ENCODE measurements at regions of chr22 and their contacts with region 1.

Region 1: DNA sequence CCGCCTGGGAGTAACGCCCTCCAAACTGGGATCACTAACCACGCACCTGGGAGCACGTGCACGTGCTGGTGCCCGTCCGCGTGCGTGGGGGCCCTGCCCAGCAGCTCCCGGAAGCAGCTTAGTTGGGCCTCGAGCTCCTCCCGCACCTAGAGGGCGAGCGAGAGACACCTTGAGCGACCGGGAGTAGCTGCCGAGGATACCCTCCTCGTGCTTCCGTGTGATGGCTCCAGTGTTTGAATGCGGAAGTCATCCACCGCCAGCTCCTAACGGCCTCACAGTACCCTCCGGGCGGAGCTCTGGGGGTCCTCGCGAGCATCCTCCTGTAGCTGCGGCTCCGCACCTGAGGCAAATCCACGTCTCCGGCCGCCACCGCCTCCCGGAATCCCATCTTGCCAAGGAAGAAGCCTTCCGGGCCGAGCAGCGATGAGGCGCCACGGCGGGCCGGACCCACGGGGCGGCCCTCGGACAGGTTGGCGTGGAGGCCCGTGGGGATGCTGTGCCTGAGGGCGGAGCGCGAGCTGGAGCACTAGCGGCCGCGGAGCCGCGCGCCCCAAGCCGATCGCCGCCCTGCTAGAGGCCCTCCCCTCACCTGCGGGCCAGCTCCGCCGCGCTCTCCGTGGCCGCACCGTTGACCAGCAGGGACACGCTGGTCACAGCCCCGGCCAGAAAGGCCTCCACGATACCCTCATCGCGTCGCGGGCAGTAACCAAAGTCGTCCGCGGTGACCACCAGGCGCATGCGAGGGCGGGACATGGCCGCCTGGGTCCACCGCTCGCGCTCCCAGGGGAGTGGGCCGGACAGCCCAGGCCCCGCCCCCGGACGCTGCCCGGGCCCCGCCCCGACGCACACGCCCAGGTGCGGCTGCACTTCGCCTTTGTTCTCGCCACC is at the start of gene YDJC:
- DNase-seq: peak; percentile 95
- ATAC-seq: peak; percentile 88
- H3K4me3 Mint-ChIP-seq: peak within 1 kb of the TSS; percentile 87
- H3K27ac Mint-ChIP-seq: peak within 1 kb of the TSS; percentile 95
- H3K4me1 Mint-ChIP-seq: peaks cover 46% of the 10 kb centered on the region
- H3K27me3 Mint-ChIP-seq: no peaks in the 10 kb centered on the region
- total RNA-seq, gene YDJC: 46.7 to 47.1 TPM

Region 2: DNA sequence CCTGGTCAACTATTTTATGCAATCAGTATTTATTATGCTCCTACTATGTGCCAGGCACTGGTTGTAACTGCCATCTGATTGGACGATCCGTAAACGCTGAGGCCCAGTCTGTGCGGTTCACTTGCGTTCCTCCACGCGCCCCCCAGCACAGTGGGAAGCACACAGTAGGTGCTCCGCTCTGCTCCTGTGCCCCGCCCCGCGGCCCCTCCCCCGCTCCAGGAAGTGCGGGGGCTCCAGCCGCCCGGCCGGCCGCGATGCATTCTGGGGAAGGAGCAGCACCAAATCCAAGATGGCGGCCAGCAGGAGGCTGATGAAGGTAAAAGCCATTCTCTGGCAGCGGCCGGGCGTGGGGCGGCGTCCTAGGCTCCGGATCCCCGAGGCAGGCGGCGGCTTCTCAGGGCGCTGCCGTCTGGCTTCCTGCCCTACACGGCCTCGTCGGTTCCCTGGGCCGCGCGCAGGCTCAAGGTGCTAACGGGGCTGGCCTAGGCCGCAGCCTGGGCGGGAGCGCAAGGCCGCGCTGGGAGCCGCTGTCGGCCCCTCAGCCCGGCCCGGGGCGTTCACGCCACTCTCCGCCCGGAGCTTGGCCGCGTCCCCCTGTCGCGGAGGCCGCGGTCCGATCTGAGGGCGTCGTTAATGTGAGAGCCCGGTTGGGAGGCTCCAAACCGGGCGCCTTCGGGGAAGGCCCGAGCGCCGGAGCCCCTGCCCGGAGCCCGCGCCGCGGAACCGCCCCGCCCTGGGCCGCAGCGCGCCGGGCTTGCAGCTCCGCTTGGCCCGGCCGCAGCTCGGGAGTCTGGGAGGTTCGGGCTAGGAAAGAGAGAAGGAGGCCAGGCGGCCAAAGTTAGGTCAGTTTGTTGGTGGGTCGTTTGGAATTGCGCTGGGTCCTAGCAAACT is 61.8 kb before region 1 on chr22 and contains the start of gene UBE2L3:
- CTCF ChIA-PET with region 1: interaction called, 13 read pairs
- POLR2A ChIA-PET with region 1: interaction called, 12 read pairs
- DNase-seq: peak; percentile 90
- ATAC-seq: peak; percentile 77
- H3K4me3 Mint-ChIP-seq: peak within 1 kb of the TSS; percentile 96
- H3K27ac Mint-ChIP-seq: peak within 1 kb of the TSS; percentile 94
- H3K4me1 Mint-ChIP-seq: peaks cover 44% of the 10 kb centered on the region
- H3K27me3 Mint-ChIP-seq: no peaks in the 10 kb centered on the region
- total RNA-seq, gene UBE2L3: 65.3 to 69.6 TPM

Region 3: DNA sequence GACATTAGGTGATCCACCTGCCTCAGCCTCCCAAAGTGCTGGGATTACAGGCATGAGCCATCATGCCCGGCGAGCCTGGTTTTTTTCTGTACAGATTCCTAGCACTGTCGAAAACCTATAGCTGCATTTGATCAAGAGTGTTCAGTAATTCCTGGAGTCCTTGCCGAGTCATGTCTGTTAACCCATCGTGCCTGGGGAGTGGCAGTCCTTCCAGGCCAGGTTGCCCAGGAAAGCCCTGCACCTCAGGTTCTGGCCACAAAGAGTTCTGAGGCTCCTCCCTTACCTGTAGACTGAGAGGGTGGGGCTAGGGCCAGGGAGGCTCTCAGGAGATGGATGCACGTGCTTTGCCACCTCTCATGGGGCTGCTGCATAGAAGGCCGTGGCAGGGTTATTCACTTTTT is 16.6 kb before region 1 on chr22:
- CTCF ChIA-PET with region 1: interaction called, 23 read pairs
- POLR2A ChIA-PET with region 1: interaction called, 10 read pairs
- DNase-seq: no peak
- ATAC-seq: no peak
- H3K4me3 Mint-ChIP-seq: no peak overlapping the region
- H3K27ac Mint-ChIP-seq: no peak overlapping the region
- H3K4me1 Mint-ChIP-seq: peaks cover 7% of the 10 kb centered on the region
- H3K27me3 Mint-ChIP-seq: no peaks in the 10 kb centered on the region

Region 4: GRCh38 chr22:21652010-21652546 is 22.6 kb after region 1 on chr22:
- CTCF ChIA-PET with region 1: interaction called, 304 read pairs
- POLR2A ChIA-PET with region 1: interaction called, 22 read pairs
- DNase-seq: peak; percentile 93
- ATAC-seq: peak; percentile 99
- H3K4me3 Mint-ChIP-seq: peak overlapping the region; percentile 94
- H3K27ac Mint-ChIP-seq: peak overlapping the region; percentile 87
- H3K4me1 Mint-ChIP-seq: peaks cover 38% of the 10 kb centered on the region
- H3K27me3 Mint-ChIP-seq: no peaks in the 10 kb centered on the region

Region 5: DNA sequence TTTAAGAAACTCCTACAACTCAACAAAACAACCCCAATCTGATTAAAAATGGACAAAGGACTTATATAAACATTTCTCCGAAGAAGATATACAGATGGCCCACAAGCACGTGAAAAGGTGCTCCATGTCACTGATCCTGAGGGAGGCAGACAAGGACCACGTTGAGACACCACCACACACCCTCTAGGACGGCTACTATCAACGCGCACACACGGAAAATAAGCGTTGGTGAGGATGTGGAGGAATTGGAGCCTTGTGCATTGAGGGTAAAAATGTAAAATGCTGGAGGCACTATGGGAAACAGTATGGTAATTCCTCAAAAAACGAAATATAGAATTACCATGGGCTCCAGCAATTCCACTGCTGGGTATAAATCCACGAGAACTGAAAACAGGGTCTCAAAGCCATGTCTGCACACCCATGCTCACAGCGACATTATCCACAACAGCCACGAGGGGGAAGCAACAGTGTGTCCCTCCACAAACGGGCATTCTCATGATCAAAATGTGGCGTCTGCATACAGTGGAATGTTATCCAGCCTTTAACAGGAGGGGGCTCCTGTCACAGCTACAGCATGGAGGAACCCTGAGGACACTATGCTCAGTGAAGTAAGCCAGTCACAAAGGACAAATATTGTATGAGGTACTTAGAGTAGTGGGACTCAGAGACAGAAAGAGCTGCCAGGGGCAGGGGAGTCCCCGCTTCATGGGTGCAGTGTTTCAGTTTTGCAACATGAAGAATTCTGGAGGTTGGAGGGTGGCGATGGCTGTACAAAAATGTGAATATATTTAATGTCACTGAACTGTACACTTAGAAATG is 83.6 kb after region 1 on chr22:
- CTCF ChIA-PET with region 1: no interaction called
- POLR2A ChIA-PET with region 1: no interaction called
- DNase-seq: peak; percentile 73
- ATAC-seq: peak; percentile 93
- H3K4me3 Mint-ChIP-seq: no peak overlapping the region
- H3K27ac Mint-ChIP-seq: no peak overlapping the region
- H3K4me1 Mint-ChIP-seq: peaks cover 6% of the 10 kb centered on the region
- H3K27me3 Mint-ChIP-seq: no peaks in the 10 kb centered on the region